A673 (cell line): ENCODE measurements at regions of chr17 and their contacts with region 1.

Region 1: GRCh38 chr17:7989781-7990655 is 12.4 kb upstream of the GUCY2D start:
- DNase-seq: peak; percentile 86
- H3K4me3 ChIP-seq: peak overlapping the region; percentile 51
- H3K27ac ChIP-seq: no peak overlapping the region
- H3K4me1 ChIP-seq: peaks cover 3% of the 10 kb centered on the region
- H3K27me3 ChIP-seq: no peaks in the 10 kb centered on the region
- CTCF ChIP-seq: peak; percentile 99

Region 2: DNA sequence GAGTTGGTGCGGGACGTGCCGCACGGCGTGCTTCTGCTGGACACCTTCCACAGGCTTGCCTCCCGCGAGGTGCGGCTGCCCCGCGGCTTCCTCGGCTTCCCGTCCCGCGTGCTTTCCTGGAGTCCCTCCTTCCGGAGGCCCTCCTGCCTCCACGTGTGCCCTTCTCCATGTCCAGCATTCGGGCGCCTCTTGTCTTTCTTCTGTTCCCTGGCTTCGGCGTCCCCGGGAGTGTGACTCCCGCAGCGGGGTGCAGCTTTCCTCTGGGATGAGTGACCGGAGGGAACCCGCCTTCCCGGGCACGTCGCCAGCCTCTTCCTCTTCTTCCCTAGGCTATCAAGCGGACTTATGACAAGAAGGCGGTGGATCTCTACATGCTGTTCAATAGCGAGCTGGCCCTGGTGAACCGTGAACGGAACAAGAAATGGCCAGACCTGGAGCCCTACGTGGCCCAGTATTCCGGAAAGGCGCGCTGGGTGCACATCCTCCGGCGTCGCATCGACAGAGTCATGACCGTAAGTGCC is 249.5 kb before region 1 on chr17:
- CTCF ChIA-PET with region 1: interaction called, 12 read pairs
- POLR2A ChIA-PET with region 1: no interaction called
- intact Hi-C with region 1: loop called (anchors 5 kb)
- DNase-seq: peak; percentile 26
- H3K4me3 ChIP-seq: peak overlapping the region; percentile 9
- H3K27ac ChIP-seq: no peak overlapping the region
- H3K4me1 ChIP-seq: peaks cover 3% of the 10 kb centered on the region
- H3K27me3 ChIP-seq: peaks cover 8% of the 10 kb centered on the region
- CTCF ChIP-seq: no peak

Region 3: GRCh38 chr17:7825206-7825990 is 164.6 kb before region 1 on chr17:
- CTCF ChIA-PET with region 1: interaction called, 9 read pairs
- POLR2A ChIA-PET with region 1: no interaction called
- intact Hi-C with region 1: loop called (anchors 1 kb)
- DNase-seq: peak; percentile 57
- H3K4me3 ChIP-seq: no peak overlapping the region
- H3K27ac ChIP-seq: no peak overlapping the region
- H3K4me1 ChIP-seq: peaks cover 15% of the 10 kb centered on the region
- H3K27me3 ChIP-seq: no peaks in the 10 kb centered on the region
- CTCF ChIP-seq: peak; percentile 42

Region 4: DNA sequence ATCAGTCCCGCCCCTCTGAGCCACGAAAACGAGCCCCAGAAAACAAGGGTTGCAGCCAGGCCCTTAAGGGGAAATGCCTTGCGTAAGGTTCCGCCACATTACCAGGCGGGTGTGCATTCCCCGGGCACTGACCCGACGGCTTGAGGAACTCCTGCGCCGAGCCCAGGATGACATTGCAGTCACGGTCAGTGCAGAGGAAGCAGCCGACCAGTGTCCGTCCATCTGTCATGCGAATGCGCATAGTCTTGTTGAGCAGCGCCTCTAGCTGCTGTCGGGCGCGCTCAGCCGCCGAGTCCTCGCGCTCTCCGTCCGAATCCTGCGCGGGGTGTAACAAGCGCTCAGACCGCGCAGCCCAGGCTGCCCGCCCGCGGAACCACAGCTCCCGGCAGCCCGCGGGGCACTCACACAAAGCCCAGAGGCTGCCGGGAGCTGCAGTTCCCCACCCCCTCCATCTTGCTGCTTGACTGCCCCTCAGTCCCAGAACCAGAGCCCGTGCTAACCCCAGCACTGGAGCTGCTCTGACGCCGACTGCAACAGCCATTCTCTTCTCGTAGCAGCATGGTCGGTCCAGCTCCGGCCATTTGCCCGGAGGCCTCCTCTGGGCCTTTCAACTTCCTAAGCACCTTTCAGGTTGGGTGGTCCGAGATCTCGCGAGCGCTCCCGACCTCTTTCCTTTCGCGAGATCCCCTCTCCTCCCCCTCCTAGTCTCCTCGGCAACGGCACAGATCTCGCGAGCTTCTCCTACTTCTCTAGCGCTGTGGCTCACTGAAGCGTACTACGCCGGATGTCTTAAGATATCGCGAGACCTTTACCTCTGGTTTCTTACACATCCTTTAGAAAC is 132.9 kb before region 1 on chr17 and contains the start of gene NAA38:
- CTCF ChIA-PET with region 1: interaction called, 11 read pairs
- POLR2A ChIA-PET with region 1: no interaction called
- intact Hi-C with region 1: loop called (anchors 2 kb)
- DNase-seq: peak; percentile 100
- H3K4me3 ChIP-seq: peak within 1 kb of the TSS; percentile 65
- H3K27ac ChIP-seq: peak within 1 kb of the TSS; percentile 93
- H3K4me1 ChIP-seq: peaks cover 18% of the 10 kb centered on the region
- H3K27me3 ChIP-seq: no peaks in the 10 kb centered on the region
- CTCF ChIP-seq: peak; percentile 53
- total RNA-seq, gene NAA38: 64.3 and 67.7 TPM in 2 replicates

Region 5: DNA sequence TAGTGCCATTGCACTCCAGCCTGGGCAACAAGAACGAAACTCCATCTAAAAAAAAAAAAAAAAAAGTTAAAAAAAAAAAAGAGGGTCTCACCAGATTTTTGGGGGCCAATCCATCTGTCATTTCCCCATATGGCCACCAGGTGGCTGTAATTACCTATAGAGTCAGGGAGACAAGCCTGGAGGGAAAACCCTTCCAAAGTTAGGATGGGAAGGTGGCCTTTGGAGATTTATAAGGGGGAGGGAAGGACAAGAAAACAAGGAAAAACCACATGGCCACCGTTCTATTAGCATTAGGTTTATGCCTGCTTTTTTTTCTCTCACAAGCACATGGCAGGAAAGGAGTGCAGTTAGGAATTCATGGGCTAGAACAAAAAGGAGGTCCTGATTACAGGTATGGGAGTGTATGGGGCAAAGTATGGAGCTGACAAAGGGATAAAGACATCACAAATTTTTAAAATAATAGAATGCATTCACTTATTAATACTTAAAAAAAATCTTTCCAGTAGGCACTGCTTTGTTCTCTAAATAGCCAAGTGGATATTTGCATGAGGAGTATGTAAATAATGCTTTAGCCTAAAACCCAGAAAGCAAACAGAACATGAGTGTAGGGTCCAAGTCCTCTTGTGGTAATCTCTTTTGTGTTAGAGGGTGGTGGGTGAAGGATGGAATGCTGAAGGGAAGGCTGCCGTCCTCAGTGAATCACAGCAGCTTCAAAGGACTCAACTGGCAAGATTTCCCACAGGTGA is 127.2 kb before region 1 on chr17:
- CTCF ChIA-PET with region 1: interaction called, 3 read pairs
- POLR2A ChIA-PET with region 1: no interaction called
- intact Hi-C with region 1: loop called (anchors 2 kb)
- DNase-seq: peak; percentile 80
- H3K4me3 ChIP-seq: no peak overlapping the region
- H3K27ac ChIP-seq: no peak overlapping the region
- H3K4me1 ChIP-seq: peaks cover 12% of the 10 kb centered on the region
- H3K27me3 ChIP-seq: no peaks in the 10 kb centered on the region
- CTCF ChIP-seq: peak; percentile 74

Region 6: DNA sequence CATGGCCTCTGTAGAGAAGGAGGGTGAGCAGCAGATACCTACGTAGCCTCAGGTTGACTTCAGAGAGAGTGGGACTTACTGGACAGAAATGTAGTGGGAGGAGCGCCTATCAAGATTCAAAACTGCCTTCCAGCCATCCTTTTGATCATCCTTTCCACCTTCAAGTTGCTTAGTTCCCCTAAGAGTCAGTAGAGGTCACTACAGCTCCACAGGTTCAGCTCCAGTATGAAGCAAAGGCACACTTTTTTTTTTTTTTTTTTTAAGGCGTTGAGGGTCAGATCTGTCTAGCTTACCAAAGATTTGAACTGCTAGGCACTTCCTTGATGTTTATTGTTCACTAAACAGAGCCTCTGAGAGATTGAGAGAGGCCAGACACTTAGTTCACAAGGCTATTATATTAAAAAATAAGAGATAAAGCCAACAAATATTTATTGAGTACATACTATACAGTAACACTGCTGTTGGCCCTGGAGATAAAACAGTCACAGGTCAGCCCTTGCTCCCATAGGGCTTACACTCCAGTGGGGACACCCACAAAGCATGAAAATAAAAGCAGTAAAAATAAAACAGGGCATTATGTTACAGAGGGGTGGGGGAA is 77.0 kb before region 1 on chr17:
- CTCF ChIA-PET with region 1: interaction called, 23 read pairs
- POLR2A ChIA-PET with region 1: no interaction called
- intact Hi-C with region 1: loop called (anchors 1 kb)
- DNase-seq: peak; percentile 75
- H3K4me3 ChIP-seq: no peak overlapping the region
- H3K27ac ChIP-seq: no peak overlapping the region
- H3K4me1 ChIP-seq: peaks cover 15% of the 10 kb centered on the region
- H3K27me3 ChIP-seq: no peaks in the 10 kb centered on the region
- CTCF ChIP-seq: peak; percentile 70

Region 7: GRCh38 chr17:8041249-8041928 is 51.4 kb after region 1 on chr17:
- CTCF ChIA-PET with region 1: interaction called, 10 read pairs
- POLR2A ChIA-PET with region 1: no interaction called
- intact Hi-C with region 1: no loop called
- DNase-seq: peak; percentile 80
- H3K4me3 ChIP-seq: no peak overlapping the region
- H3K27ac ChIP-seq: no peak overlapping the region
- H3K4me1 ChIP-seq: peaks cover 6% of the 10 kb centered on the region
- H3K27me3 ChIP-seq: no peaks in the 10 kb centered on the region
- CTCF ChIP-seq: peak; percentile 69